ENCODE measurements at regions of chr6 and their contacts with region 1.

Region 1: GRCh38 chr6:137589067-137589848 is 95.1 kb upstream of the OLIG3 start:
- DNase-seq: peak; percentile 66 to 85 (median 77)
- H3K4me3 ChIP-seq: no peak overlapping the region
- H3K4me3 Mint-ChIP-seq: peak overlapping the region in 3 of 8 donors; percentile 15 to 69 (median 27)
- H3K27ac ChIP-seq: no peak overlapping the region
- H3K27ac Mint-ChIP-seq: peak overlapping the region in 4 of 7 donors; percentile 5 to 30 (median 14)
- H3K4me1 ChIP-seq: peaks cover 14% of the 10 kb centered on the region
- H3K4me1 Mint-ChIP-seq: peaks cover 9 to 19% (median 14%) of the 10 kb centered on the region in 4 donors
- H3K27me3 ChIP-seq: peaks cover 4% of the 10 kb centered on the region
- H3K27me3 Mint-ChIP-seq: peaks cover 9% of the 10 kb centered on the region in 2 donors

Region 2: GRCh38 chr6:137094411-137095008 is 494.7 kb before region 1 on chr6:
- CTCF ChIA-PET with region 1: interaction called, 6 read pairs
- POLR2A ChIA-PET with region 1: no interaction called
- intact Hi-C with region 1: loop called (anchors 5 kb)
- DNase-seq: peak; percentile 55 to 59 (median 57)
- H3K4me3 ChIP-seq: no peak overlapping the region
- H3K4me3 Mint-ChIP-seq: peak overlapping the region in 3 of 8 donors; percentile 13 to 42 (median 27)
- H3K27ac ChIP-seq: no peak overlapping the region
- H3K27ac Mint-ChIP-seq: peak overlapping the region in 3 of 7 donors; percentile 42 to 67 (median 61)
- H3K4me1 ChIP-seq: peaks cover 19% of the 10 kb centered on the region
- H3K4me1 Mint-ChIP-seq: peaks cover 12 to 26% (median 15%) of the 10 kb centered on the region in 4 donors
- H3K27me3 ChIP-seq: no peaks in the 10 kb centered on the region
- H3K27me3 Mint-ChIP-seq: peaks cover 3 to 4% of the 10 kb centered on the region in 2 donors

Region 3: DNA sequence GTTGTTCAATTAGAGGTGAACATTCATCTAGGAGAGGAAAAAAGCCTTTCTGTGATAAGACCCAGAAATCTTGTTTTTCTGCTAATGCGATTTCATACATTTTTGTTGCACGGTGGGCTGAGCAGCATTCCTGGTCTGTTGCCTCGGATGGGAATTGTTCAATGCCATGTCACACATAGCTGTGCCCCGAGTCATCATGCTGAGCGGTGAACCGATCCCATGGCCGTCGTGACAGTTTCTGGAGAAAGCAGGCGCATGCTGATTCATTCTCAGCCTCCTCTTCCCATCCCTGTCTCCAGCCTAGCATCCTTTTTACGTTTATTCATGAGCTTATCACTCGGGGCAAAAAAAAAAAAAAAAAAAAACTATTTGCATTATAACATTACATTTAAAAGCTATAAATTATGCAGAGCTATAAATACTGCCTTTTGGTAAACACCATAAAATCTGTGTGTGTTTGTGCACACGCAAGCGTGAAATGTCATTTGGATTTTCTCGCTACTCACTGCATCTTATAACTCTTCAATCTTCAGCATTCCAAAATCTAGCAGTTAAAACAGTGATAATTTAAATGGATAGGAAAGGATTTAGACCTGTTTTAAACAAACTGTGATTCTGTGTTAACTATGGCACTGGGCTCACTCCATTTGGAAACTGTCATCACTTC is 311.2 kb before region 1 on chr6:
- CTCF ChIA-PET with region 1: no interaction called
- POLR2A ChIA-PET with region 1: no interaction called
- intact Hi-C with region 1: no loop called
- DNase-seq: no peak
- H3K4me3 ChIP-seq: no peak overlapping the region
- H3K4me3 Mint-ChIP-seq: no peak overlapping the region
- H3K27ac ChIP-seq: no peak overlapping the region
- H3K27ac Mint-ChIP-seq: no peak overlapping the region
- H3K4me1 ChIP-seq: no peaks in the 10 kb centered on the region
- H3K4me1 Mint-ChIP-seq: peaks cover 0 to 3% (median 0%) of the 10 kb centered on the region in 4 donors
- H3K27me3 ChIP-seq: no peaks in the 10 kb centered on the region
- H3K27me3 Mint-ChIP-seq: peaks cover 5 to 12% of the 10 kb centered on the region in 2 donors

Region 4: DNA sequence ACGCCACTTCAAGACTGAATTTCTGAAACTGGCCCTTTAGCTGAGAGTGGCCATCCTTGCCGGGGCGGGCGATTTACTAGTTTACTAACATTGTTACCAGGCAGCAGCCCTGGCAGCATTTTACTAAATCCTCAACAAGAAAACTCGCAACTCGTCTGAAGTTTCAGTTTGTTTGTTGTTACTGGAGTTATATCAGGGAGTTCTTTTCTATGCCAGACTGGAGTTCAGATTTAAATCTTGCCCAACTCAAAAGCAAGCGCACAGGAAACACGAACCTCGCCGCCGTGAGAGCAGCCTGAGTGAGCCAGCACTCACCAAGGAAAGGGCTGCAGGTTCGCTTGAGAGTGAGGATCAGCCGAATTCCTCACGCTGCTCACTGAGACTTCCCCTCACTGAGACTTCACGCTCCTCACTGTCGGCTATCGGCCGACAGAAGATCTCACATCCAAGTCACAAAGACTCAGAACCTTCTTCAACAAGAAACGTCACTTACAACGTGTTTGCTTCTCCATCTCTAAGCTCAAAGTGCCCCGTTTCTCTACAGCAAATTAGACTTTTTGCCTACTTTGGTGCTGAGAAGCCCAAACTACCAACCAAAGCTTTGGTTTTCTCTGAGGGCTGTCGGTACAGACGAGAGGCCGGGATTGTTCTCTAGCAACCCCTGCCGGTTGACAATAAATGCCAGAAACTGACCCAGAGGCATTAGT is 174.0 kb before region 1 on chr6:
- CTCF ChIA-PET with region 1: interaction called, 51 read pairs
- POLR2A ChIA-PET with region 1: interaction called, 6 read pairs
- intact Hi-C with region 1: loop called (anchors 1 kb)
- DNase-seq: peak; percentile 62 to 76 (median 73)
- H3K4me3 ChIP-seq: peak overlapping the region; percentile 48 to 53
- H3K4me3 Mint-ChIP-seq: peak overlapping the region; percentile 83 to 93 (median 88)
- H3K27ac ChIP-seq: peak overlapping the region; percentile 60
- H3K27ac Mint-ChIP-seq: peak overlapping the region; percentile 79 to 97 (median 92)
- H3K4me1 ChIP-seq: peaks cover 10% of the 10 kb centered on the region
- H3K4me1 Mint-ChIP-seq: peaks cover 6 to 20% (median 14%) of the 10 kb centered on the region in 4 donors
- H3K27me3 ChIP-seq: no peaks in the 10 kb centered on the region
- H3K27me3 Mint-ChIP-seq: no peaks in the 10 kb centered on the region

Region 5: GRCh38 chr6:137518386-137518983 is 70.8 kb before region 1 on chr6:
- CTCF ChIA-PET with region 1: interaction called, 10 read pairs
- POLR2A ChIA-PET with region 1: no interaction called
- intact Hi-C with region 1: no loop called
- DNase-seq: no peak
- H3K4me3 ChIP-seq: no peak overlapping the region
- H3K4me3 Mint-ChIP-seq: no peak overlapping the region
- H3K27ac ChIP-seq: no peak overlapping the region
- H3K27ac Mint-ChIP-seq: no peak overlapping the region
- H3K4me1 ChIP-seq: no peaks in the 10 kb centered on the region
- H3K4me1 Mint-ChIP-seq: peaks cover 2 to 7% (median 3%) of the 10 kb centered on the region in 4 donors
- H3K27me3 ChIP-seq: peaks cover 26% of the 10 kb centered on the region
- H3K27me3 Mint-ChIP-seq: peaks cover 41 to 62% of the 10 kb centered on the region in 2 donors

Region 6: GRCh38 chr6:137560184-137560563 is 29.1 kb before region 1 on chr6:
- CTCF ChIA-PET with region 1: interaction called, 16 read pairs
- POLR2A ChIA-PET with region 1: interaction called, 14 read pairs
- intact Hi-C with region 1: loop called (anchors 2 kb)
- DNase-seq: no peak
- H3K4me3 ChIP-seq: peak overlapping the region in 1 of 2 donors; percentile 10
- H3K4me3 Mint-ChIP-seq: peak overlapping the region in 7 of 8 donors; percentile 70 to 89 (median 78)
- H3K27ac ChIP-seq: no peak overlapping the region
- H3K27ac Mint-ChIP-seq: peak overlapping the region in 6 of 7 donors; percentile 79 to 93 (median 88)
- H3K4me1 ChIP-seq: peaks cover 36% of the 10 kb centered on the region
- H3K4me1 Mint-ChIP-seq: peaks cover 31 to 67% (median 47%) of the 10 kb centered on the region in 4 donors
- H3K27me3 ChIP-seq: no peaks in the 10 kb centered on the region
- H3K27me3 Mint-ChIP-seq: peaks cover 0 to 2% of the 10 kb centered on the region in 2 donors

Region 7: GRCh38 chr6:137641474-137642077 is 52.3 kb after region 1 on chr6:
- CTCF ChIA-PET with region 1: interaction called, 5 read pairs
- POLR2A ChIA-PET with region 1: no interaction called
- intact Hi-C with region 1: loop called (anchors 1 kb)
- DNase-seq: peak; percentile 58 to 66 (median 64)
- H3K4me3 ChIP-seq: no peak overlapping the region
- H3K4me3 Mint-ChIP-seq: no peak overlapping the region
- H3K27ac ChIP-seq: no peak overlapping the region
- H3K27ac Mint-ChIP-seq: no peak overlapping the region
- H3K4me1 ChIP-seq: peaks cover 10% of the 10 kb centered on the region
- H3K4me1 Mint-ChIP-seq: peaks cover 6 to 15% (median 12%) of the 10 kb centered on the region in 4 donors
- H3K27me3 ChIP-seq: no peaks in the 10 kb centered on the region
- H3K27me3 Mint-ChIP-seq: peaks cover 4 to 5% of the 10 kb centered on the region in 2 donors

Region 8: DNA sequence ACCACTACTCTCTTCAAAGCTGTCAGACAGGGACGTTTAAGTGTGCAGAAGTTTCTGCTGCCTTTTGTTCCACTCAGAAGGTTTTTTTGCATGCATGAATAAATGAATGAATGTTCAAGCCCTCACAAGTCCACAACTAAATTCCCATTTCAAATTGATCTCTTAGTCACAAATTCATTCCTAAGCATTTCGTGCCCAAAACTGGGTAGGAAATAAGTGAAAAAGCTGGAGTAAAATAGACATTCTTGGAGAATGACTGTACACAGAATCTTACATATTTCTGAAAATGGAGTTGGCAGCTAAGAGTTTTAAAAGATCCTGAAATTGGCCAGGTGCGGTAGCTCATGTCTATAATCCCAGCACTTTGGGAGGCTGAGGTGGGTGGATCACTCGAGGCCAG is 400.4 kb after region 1 on chr6:
- CTCF ChIA-PET with region 1: no interaction called
- POLR2A ChIA-PET with region 1: no interaction called
- intact Hi-C with region 1: no loop called
- DNase-seq: no peak
- H3K4me3 ChIP-seq: no peak overlapping the region
- H3K4me3 Mint-ChIP-seq: no peak overlapping the region
- H3K27ac ChIP-seq: no peak overlapping the region
- H3K27ac Mint-ChIP-seq: no peak overlapping the region
- H3K4me1 ChIP-seq: no peaks in the 10 kb centered on the region
- H3K4me1 Mint-ChIP-seq: no peaks in the 10 kb centered on the region
- H3K27me3 ChIP-seq: no peaks in the 10 kb centered on the region
- H3K27me3 Mint-ChIP-seq: peaks cover 5 to 10% of the 10 kb centered on the region in 2 donors